ENCODE measurements at regions of chr16 and their contacts with region 1.

Region 1: DNA sequence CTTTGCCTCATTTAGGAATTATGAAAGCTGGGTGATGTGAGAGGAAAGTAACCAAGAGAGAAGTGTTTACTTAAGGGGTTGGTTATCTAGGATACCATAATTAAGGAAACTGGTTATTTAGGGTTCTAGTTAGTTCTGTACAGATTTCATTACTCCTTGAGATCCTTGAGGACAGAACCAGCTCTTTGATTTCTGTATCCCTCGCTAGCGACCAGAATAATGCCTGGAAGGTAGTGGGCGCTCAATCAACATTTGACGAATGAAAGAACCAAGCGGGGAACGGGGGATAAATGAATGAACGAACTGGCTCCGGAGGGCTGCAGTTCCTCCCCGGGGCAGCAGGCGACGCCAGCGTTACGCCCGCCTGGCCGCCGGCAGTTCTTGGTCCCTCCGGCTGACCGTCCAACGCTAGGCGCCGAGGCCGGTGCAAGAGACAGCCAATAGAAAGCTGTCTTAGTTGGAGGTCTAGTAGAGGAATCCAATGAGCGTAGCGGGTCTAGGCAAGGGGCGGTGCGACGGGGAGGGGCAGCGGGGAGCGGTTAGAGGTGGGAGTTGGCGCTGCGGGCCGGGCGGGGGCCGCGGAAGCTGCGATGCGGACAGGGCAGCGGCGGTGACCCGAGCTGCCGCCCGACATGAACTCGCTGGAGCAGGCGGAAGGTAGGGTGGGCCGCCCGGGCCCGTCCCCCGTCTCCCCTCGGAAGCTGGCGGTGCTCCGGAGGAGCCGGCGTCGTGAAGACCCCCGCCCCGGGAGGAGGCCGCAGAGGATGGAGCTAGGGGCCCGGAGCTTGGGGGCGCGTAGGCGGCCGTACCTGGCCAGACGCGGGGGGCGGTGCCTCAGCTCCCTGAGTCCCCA is at the start of gene CNEP1R1:
- DNase-seq: peak; percentile 96
- H3K4me3 ChIP-seq: peak within 1 kb of the TSS; percentile 92
- H3K27ac ChIP-seq: peak within 1 kb of the TSS; percentile 81
- H3K4me1 ChIP-seq: peaks cover 7% of the 10 kb centered on the region
- H3K27me3 ChIP-seq: no peaks in the 10 kb centered on the region
- CTCF ChIP-seq: peak; percentile 99
- total RNA-seq, gene CNEP1R1: 13.4 to 22.4 TPM

Region 2: DNA sequence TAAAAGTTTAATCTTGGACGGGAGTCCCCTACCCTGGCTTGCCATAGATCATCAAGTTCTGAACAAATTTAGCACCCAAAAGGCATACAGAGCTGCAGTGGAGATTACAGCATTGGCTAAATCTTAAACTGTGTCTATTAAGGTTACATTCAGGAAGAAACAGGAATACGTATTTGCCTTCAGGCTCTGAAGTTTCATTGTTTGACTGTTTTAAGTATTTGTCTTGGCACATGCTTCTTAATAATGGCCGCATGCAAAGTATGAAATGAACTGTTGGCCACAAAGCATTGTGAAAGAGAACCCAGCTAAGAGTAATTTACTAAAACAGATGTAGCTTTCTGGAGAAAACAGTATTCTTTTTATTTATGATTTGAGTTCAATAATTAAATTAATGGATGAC is 63.8 kb before region 1 on chr16:
- intact Hi-C with region 1: loop called (anchors 5 kb)
- DNase-seq: no peak
- H3K4me3 ChIP-seq: no peak overlapping the region
- H3K27ac ChIP-seq: no peak overlapping the region
- H3K4me1 ChIP-seq: no peaks in the 10 kb centered on the region
- H3K27me3 ChIP-seq: no peaks in the 10 kb centered on the region
- CTCF ChIP-seq: no peak

Region 3: DNA sequence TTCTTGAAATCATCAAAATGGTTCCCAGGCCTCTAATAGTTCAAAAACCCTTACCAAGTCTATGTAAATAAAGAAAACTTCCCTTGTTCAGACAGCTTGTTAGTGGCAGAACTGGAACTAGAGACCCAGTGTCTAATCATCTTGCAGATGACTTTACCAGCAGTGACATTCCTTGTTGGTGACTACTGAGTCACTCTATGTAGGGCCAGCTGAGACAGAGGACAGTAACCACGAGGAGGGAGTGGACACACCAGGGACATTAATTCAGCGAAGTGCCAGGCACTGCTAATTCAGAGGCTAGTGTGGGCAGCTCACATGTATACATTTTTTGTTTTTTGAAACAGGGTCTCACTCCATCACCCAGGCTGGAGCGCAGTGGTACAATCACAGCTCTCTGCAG is 34.8 kb after region 1 on chr16:
- intact Hi-C with region 1: loop called (anchors 5 kb)
- DNase-seq: no peak
- H3K4me3 ChIP-seq: no peak overlapping the region
- H3K27ac ChIP-seq: no peak overlapping the region
- H3K4me1 ChIP-seq: no peaks in the 10 kb centered on the region
- H3K27me3 ChIP-seq: no peaks in the 10 kb centered on the region
- CTCF ChIP-seq: no peak

Region 4: GRCh38 chr16:50152807-50153452 is 128.0 kb after region 1 on chr16 and contains the start of gene TENT4B:
- intact Hi-C with region 1: loop called (anchors 10 kb)
- DNase-seq: peak; percentile 92
- H3K4me3 ChIP-seq: peak within 1 kb of the TSS; percentile 88
- H3K27ac ChIP-seq: peak within 1 kb of the TSS; percentile 89
- H3K4me1 ChIP-seq: no peaks in the 10 kb centered on the region
- H3K27me3 ChIP-seq: no peaks in the 10 kb centered on the region
- CTCF ChIP-seq: no peak
- total RNA-seq, gene TENT4B: 13.5 to 15.6 TPM

Region 5: GRCh38 chr16:50210266-50211038 is 185.5 kb after region 1 on chr16:
- intact Hi-C with region 1: loop called (anchors 2 kb)
- DNase-seq: peak; percentile 76
- H3K4me3 ChIP-seq: no peak overlapping the region
- H3K27ac ChIP-seq: peak overlapping the region; percentile 46
- H3K4me1 ChIP-seq: peaks cover 20% of the 10 kb centered on the region
- H3K27me3 ChIP-seq: no peaks in the 10 kb centered on the region
- CTCF ChIP-seq: peak; percentile 66

Region 6: DNA sequence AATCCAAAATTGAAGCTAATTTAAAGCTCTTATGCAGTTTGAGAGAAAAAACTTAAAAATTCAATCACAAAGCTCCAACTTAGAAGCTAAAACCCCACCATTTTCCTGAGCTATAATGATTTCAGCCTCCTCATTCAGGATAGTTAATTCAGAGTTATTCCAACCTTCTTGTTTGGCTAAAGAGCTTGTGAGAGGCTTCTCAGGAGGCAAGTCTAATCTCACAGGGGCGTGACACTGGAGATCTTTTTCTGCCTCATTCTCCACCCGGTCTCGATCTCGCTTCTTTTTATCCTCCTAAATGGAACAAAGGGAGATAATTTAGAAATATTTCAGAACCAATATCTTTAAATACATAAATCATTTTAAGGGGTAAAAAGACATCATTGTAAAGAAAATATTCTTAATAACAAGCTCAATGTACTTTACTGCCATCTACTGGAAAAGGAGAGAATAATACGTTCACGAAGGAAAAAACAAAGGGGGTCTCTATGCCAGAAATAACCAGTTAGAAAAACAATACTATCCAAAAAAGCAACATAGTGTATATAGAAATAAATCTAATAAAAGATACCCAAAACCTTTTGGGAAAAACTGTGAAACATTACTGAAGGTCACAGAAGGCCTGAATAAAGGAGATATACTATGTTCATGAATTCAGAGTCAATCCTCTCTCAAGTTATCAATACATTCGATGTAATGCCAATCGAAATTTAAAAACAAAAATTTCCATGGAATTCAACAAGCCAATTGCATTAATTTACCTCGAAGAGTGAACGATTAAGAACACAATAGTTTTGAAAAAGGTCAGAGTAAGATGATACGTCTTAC is 329.9 kb after region 1 on chr16:
- intact Hi-C with region 1: loop called (anchors 5 kb)
- DNase-seq: no peak
- H3K4me3 ChIP-seq: no peak overlapping the region
- H3K27ac ChIP-seq: no peak overlapping the region
- H3K4me1 ChIP-seq: no peaks in the 10 kb centered on the region
- H3K27me3 ChIP-seq: no peaks in the 10 kb centered on the region
- CTCF ChIP-seq: peak; percentile 62

Region 7: GRCh38 chr16:50360033-50360778 is 335.3 kb after region 1 on chr16:
- intact Hi-C with region 1: loop called (anchors 5 kb)
- DNase-seq: no peak
- H3K4me3 ChIP-seq: no peak overlapping the region
- H3K27ac ChIP-seq: no peak overlapping the region
- H3K4me1 ChIP-seq: no peaks in the 10 kb centered on the region
- H3K27me3 ChIP-seq: no peaks in the 10 kb centered on the region
- CTCF ChIP-seq: no peak